B cell (primary cell): ENCODE measurements at regions of chr11 and their contacts with region 1.

Region 1: GRCh38 chr11:17504330-17505107 is 27.9 kb upstream of the ABCC8 start:
- DNase-seq: peak; percentile 79
- ATAC-seq: peak; percentile 68
- H3K4me3 ChIP-seq: no peak overlapping the region
- H3K4me3 Mint-ChIP-seq: no peak overlapping the region
- H3K27ac ChIP-seq: no peak overlapping the region
- H3K27ac Mint-ChIP-seq: no peak overlapping the region
- H3K4me1 ChIP-seq: no peaks in the 10 kb centered on the region
- H3K4me1 Mint-ChIP-seq: no peaks in the 10 kb centered on the region
- H3K27me3 ChIP-seq: no peaks in the 10 kb centered on the region
- H3K27me3 Mint-ChIP-seq: peaks cover 9% of the 10 kb centered on the region
- CTCF ChIP-seq: peak; percentile 82

Region 2: GRCh38 chr11:16785520-16786128 is 718.9 kb before region 1 on chr11:
- CTCF ChIA-PET with region 1: interaction called, 10 read pairs
- POLR2A ChIA-PET with region 1: no interaction called
- intact Hi-C with region 1: no loop called
- DNase-seq: peak; percentile 65
- ATAC-seq: peak; percentile 81
- H3K4me3 ChIP-seq: no peak overlapping the region
- H3K4me3 Mint-ChIP-seq: no peak overlapping the region
- H3K27ac ChIP-seq: no peak overlapping the region
- H3K27ac Mint-ChIP-seq: no peak overlapping the region
- H3K4me1 ChIP-seq: no peaks in the 10 kb centered on the region
- H3K4me1 Mint-ChIP-seq: no peaks in the 10 kb centered on the region
- H3K27me3 ChIP-seq: no peaks in the 10 kb centered on the region
- H3K27me3 Mint-ChIP-seq: no peaks in the 10 kb centered on the region
- CTCF ChIP-seq: peak; percentile 89

Region 3: DNA sequence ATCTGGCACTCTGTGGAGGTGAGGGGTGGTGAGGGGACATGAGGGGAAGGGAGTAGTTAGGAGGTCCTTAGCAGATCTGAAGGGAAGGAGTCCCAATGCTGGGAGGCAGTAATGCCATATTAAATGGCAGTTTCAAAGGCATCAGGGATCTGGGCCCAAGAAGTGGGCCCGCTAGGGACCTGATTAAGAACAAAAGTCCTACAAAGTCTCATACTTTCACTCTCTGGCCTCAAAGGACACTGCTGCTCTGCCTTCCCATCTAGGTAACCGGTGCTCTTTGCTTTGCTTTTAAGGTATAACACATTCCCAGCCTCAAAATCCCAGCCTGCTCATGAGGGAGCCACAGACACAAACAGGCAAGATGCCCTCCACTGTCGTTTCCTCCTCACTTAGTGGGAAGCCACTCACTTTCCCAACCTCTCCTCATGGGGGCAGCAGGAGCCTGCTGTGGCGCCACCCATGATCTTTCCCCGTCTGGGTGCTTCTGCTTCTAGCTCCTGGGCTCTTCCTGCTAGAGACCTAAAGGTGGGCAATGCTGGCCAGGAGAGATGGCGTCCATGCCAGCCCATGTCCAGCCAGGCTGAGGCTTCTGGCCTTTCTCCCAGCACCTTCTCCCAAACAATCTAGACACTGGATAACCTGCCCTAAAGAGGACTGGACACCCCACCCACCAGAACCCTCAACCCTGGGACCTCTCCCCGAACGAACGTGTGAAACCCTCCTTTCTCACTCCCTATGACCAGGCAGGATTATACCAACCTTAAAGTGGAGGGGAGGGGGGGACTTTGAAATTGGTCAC is 558.6 kb before region 1 on chr11:
- CTCF ChIA-PET with region 1: interaction called, 4 read pairs
- POLR2A ChIA-PET with region 1: no interaction called
- intact Hi-C with region 1: loop called (anchors 10 kb)
- DNase-seq: peak; percentile 51
- ATAC-seq: peak; percentile 69
- H3K4me3 ChIP-seq: peak overlapping the region in 3 of 5 experiments; percentile 4 to 28 (median 24)
- H3K4me3 Mint-ChIP-seq: peak overlapping the region; percentile 66
- H3K27ac ChIP-seq: peak overlapping the region; percentile 7 to 29
- H3K27ac Mint-ChIP-seq: peak overlapping the region; percentile 44
- H3K4me1 ChIP-seq: peaks cover 14 to 15% of the 10 kb centered on the region in 2 donors
- H3K4me1 Mint-ChIP-seq: peaks cover 17% of the 10 kb centered on the region
- H3K27me3 ChIP-seq: peaks cover 0 to 3% (median 0%) of the 10 kb centered on the region in 4 experiments
- H3K27me3 Mint-ChIP-seq: no peaks in the 10 kb centered on the region
- CTCF ChIP-seq: peak; percentile 27

Region 4: GRCh38 chr11:17230867-17231851 is 273.4 kb before region 1 on chr11:
- CTCF ChIA-PET with region 1: interaction called, 11 read pairs
- POLR2A ChIA-PET with region 1: no interaction called
- intact Hi-C with region 1: no loop called
- DNase-seq: peak; percentile 45
- ATAC-seq: peak; percentile 66
- H3K4me3 ChIP-seq: no peak overlapping the region
- H3K4me3 Mint-ChIP-seq: peak overlapping the region; percentile 30
- H3K27ac ChIP-seq: no peak overlapping the region
- H3K27ac Mint-ChIP-seq: no peak overlapping the region
- H3K4me1 ChIP-seq: peaks cover 4 to 17% of the 10 kb centered on the region in 2 donors
- H3K4me1 Mint-ChIP-seq: peaks cover 11% of the 10 kb centered on the region
- H3K27me3 ChIP-seq: no peaks in the 10 kb centered on the region
- H3K27me3 Mint-ChIP-seq: no peaks in the 10 kb centered on the region
- CTCF ChIP-seq: no peak

Region 5: DNA sequence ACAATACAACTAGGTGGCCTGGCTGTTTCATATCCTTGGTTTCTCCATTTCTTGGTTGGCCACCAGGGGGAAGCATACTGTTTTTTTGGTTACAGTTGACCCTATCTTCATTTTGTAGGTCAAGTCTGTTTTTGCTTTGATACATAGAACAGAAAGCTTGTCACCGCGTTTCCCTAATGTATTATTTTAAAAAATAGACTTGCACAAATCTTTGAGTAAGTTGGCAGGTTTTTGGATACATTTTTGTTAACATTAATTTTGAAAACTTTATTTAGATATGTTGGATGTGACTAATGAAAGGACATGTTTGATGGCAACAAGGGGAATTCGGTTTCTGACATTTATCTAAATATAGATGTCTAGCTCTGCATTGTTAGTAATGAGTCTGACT is 149.9 kb before region 1 on chr11:
- CTCF ChIA-PET with region 1: interaction called, 9 read pairs
- POLR2A ChIA-PET with region 1: no interaction called
- intact Hi-C with region 1: loop called (anchors 1 kb)
- DNase-seq: peak; percentile 80
- ATAC-seq: no peak
- H3K4me3 ChIP-seq: no peak overlapping the region
- H3K4me3 Mint-ChIP-seq: peak overlapping the region; percentile 95
- H3K27ac ChIP-seq: no peak overlapping the region
- H3K27ac Mint-ChIP-seq: no peak overlapping the region
- H3K4me1 ChIP-seq: peaks cover 29 to 34% of the 10 kb centered on the region in 2 donors
- H3K4me1 Mint-ChIP-seq: peaks cover 32% of the 10 kb centered on the region
- H3K27me3 ChIP-seq: peaks cover 0 to 34% (median 21%) of the 10 kb centered on the region in 4 experiments
- H3K27me3 Mint-ChIP-seq: peaks cover 33% of the 10 kb centered on the region
- CTCF ChIP-seq: peak; percentile 82

Region 6: GRCh38 chr11:17389211-17389956 is 115.1 kb before region 1 on chr11:
- CTCF ChIA-PET with region 1: interaction called, 116 read pairs
- POLR2A ChIA-PET with region 1: no interaction called
- intact Hi-C with region 1: loop called (anchors 1 kb)
- DNase-seq: peak; percentile 88
- ATAC-seq: peak; percentile 94
- H3K4me3 ChIP-seq: peak overlapping the region; percentile 16 to 90 (median 63)
- H3K4me3 Mint-ChIP-seq: peak overlapping the region; percentile 85
- H3K27ac ChIP-seq: peak overlapping the region in 1 of 2 donors; percentile 29
- H3K27ac Mint-ChIP-seq: peak overlapping the region; percentile 59
- H3K4me1 ChIP-seq: peaks cover 4 to 33% of the 10 kb centered on the region in 2 donors
- H3K4me1 Mint-ChIP-seq: peaks cover 16% of the 10 kb centered on the region
- H3K27me3 ChIP-seq: peaks cover 0 to 2% (median 0%) of the 10 kb centered on the region in 4 experiments
- H3K27me3 Mint-ChIP-seq: peaks cover 5% of the 10 kb centered on the region
- CTCF ChIP-seq: peak; percentile 82

Region 7: GRCh38 chr11:17542249-17542648 is 37.7 kb after region 1 on chr11:
- CTCF ChIA-PET with region 1: no interaction called
- POLR2A ChIA-PET with region 1: no interaction called
- intact Hi-C with region 1: no loop called
- DNase-seq: no peak
- ATAC-seq: no peak
- H3K4me3 ChIP-seq: no peak overlapping the region
- H3K4me3 Mint-ChIP-seq: no peak overlapping the region
- H3K27ac ChIP-seq: no peak overlapping the region
- H3K27ac Mint-ChIP-seq: no peak overlapping the region
- H3K4me1 ChIP-seq: peaks cover 0 to 3% of the 10 kb centered on the region in 2 donors
- H3K4me1 Mint-ChIP-seq: no peaks in the 10 kb centered on the region
- H3K27me3 ChIP-seq: peaks cover 0 to 26% (median 2%) of the 10 kb centered on the region in 4 experiments
- H3K27me3 Mint-ChIP-seq: peaks cover 51% of the 10 kb centered on the region
- CTCF ChIP-seq: no peak